Heart right ventricle (tissue), 16 donors: ENCODE measurements at regions of chr11 and their contacts with region 1.

Region 1: GRCh38 chr11:100991541-100991940 is 138.1 kb downstream of the PGR start:
- DNase-seq: no peak
- ATAC-seq: no peak
- H3K4me3 ChIP-seq: no peak overlapping the region
- H3K27ac ChIP-seq: no peak overlapping the region
- H3K4me1 ChIP-seq: peaks cover 0 to 6% (median 0%) of the 10 kb centered on the region in 9 donors
- H3K27me3 ChIP-seq: no peaks in the 10 kb centered on the region
- CTCF ChIP-seq: no peak

Region 2: GRCh38 chr11:100789500-100789899 is 202.0 kb before region 1 on chr11:
- intact Hi-C with region 1: no loop called
- DNase-seq: peak; percentile 25 to 46
- ATAC-seq: peak; percentile 44 to 85 (median 68)
- H3K4me3 ChIP-seq: no peak overlapping the region
- H3K27ac ChIP-seq: peak overlapping the region in 3 of 10 donors; percentile 13 to 41 (median 33)
- H3K4me1 ChIP-seq: peaks cover 0 to 53% (median 36%) of the 10 kb centered on the region in 9 donors
- H3K27me3 ChIP-seq: no peaks in the 10 kb centered on the region
- CTCF ChIP-seq: no peak

Region 3: GRCh38 chr11:100956351-100956750 is 35.2 kb before region 1 on chr11:
- intact Hi-C with region 1: no loop called
- DNase-seq: no peak
- ATAC-seq: no peak
- H3K4me3 ChIP-seq: no peak overlapping the region
- H3K27ac ChIP-seq: no peak overlapping the region
- H3K4me1 ChIP-seq: peaks cover 0 to 6% (median 0%) of the 10 kb centered on the region in 9 donors
- H3K27me3 ChIP-seq: no peaks in the 10 kb centered on the region
- CTCF ChIP-seq: no peak

Region 4: GRCh38 chr11:101133190-101133589 is 141.6 kb after region 1 on chr11:
- intact Hi-C with region 1: loop called in 4 of 10 experiments (anchors 10 kb)
- DNase-seq: no peak
- ATAC-seq: no peak
- H3K4me3 ChIP-seq: no peak overlapping the region
- H3K27ac ChIP-seq: no peak overlapping the region
- H3K4me1 ChIP-seq: peaks cover 0 to 19% (median 0%) of the 10 kb centered on the region in 9 donors
- H3K27me3 ChIP-seq: peaks cover 0 to 27% (median 10%) of the 10 kb centered on the region in 7 donors
- CTCF ChIP-seq: no peak

Region 5: DNA sequence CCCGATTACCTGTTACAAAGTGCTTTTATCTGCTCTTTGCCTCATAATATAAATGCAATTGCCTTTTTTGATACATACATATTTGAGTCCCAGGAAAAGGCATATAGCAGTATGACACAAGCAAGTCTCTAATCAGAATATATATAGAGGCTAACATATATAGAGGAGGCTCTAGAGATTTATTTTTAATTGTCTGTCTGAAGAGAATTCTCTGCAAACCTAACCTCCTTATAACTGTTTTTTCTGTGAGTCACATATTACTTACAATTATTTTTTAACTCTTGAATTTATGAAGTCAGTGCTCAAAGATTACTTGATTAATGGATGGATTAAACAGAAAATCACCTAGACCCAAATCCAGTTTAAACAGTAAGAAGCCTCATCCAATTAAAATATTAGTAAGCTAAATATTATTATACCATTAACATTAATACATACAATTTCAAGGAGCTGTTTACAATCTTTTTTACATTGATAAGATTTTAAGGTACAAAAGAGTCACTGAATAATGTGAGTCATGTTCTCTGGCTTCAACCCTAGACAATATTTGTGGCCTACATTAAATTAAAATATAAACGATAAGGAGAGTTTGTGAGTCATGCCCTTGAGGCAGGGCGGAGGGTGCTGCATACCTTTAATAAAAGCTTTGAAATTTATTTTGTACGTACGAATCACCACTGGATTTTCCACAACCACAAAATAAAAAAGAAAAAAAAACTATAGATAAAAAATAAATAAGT is 1983.2 kb after region 1 on chr11:
- intact Hi-C with region 1: no loop called
- DNase-seq: no peak
- ATAC-seq: no peak
- H3K4me3 ChIP-seq: no peak overlapping the region
- H3K27ac ChIP-seq: no peak overlapping the region
- H3K4me1 ChIP-seq: no peaks in the 10 kb centered on the region
- H3K27me3 ChIP-seq: no peaks in the 10 kb centered on the region
- CTCF ChIP-seq: no peak